CD4-positive, alpha-beta T cell (primary cell): ENCODE measurements at regions of chr14 and their contacts with region 1.

Region 1: DNA sequence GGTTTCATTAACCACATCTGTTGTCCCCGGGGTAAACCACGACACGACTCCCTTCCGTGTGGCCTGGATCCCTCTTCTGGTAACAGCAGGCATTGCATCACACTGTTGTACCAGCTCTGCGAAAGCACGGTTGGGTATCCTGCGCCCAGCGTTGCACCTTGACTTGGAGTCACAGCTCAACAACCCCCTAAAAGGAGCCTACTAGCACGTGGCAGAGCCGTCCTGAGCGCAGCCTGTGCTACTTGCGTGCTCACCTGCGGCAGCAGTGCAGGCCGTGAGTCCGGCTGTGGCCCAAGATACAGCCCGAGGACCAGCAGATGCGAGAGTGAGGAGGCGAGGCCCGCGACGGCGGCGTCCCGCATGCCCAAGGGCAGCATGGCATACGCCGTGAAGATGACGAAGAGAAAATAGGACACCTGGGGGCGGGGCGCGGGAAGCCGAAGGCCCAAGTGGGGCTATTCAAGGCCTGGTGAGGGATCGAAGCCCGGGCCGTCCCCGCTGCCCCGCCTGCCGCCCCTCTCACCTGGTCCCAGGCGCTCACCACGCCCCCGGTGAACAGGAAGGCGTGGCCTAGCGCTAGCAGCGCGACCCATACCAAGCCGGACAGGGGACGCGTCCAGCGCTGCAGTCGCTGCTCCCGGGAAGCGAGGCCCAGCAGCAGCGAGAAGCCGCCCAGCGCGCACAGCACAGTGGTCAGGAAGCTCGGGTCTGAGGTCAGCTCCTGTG is 2.4 kb downstream of the ADCY4 start:
- DNase-seq: peak; percentile 75 to 95 (median 84)
- ATAC-seq: peak; percentile 93
- H3K4me3 ChIP-seq: peak overlapping the region; percentile 48
- H3K4me3 Mint-ChIP-seq: peak overlapping the region; percentile 86
- H3K27ac ChIP-seq: no peak overlapping the region
- H3K27ac Mint-ChIP-seq: peak overlapping the region; percentile 52
- H3K4me1 ChIP-seq: peaks cover 78% of the 10 kb centered on the region
- H3K4me1 Mint-ChIP-seq: peaks cover 59% of the 10 kb centered on the region
- H3K27me3 ChIP-seq: peaks cover 26 to 27% of the 10 kb centered on the region in 2 experiments
- H3K27me3 Mint-ChIP-seq: peaks cover 49% of the 10 kb centered on the region
- CTCF ChIP-seq: peak; percentile 81

Region 2: DNA sequence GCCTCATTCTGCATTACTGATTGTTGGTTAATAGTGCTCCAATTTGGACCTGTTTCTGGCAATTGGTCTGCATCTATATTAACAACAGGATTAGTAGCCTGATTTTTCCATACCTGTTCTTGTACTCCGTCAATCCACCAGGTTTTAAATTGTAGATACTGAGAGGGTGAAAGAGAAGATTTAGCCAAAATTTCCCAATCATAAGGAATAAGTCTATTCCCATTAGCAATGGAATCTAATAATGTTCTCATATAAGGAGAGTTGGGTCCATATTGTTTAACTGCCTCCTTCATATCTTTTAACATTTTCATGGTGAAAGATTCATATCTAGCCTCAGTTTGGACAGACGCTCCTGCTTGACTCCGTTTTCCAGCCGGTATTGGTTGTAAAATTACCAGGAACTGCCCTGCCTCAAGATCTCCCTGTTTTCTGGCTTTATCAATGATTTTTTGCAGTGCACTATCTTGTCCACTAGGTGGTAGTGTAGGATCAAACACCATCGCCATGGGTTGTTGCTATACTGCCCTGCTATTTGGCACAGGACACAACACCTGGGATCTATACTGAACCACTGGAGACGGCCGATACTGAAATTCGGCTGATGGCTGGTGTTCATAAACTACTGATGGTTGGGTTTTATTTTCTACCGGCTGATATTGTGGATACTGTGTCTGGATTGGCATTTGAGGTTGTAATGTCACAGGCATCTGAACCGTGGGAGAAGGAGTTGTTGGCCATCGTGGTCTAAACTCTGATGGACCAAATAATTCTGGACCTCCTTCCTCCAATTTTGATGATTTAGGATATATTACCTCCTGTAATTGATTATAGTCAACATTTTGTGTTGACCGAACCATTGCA is 318.5 kb before region 1 on chr14:
- CTCF ChIA-PET with region 1: no interaction called
- POLR2A ChIA-PET with region 1: no interaction called
- intact Hi-C with region 1: loop called in 1 of 2 experiments (anchors 1 kb)
- DNase-seq: peak in 12 of 14 experiments; percentile 9 to 85 (median 32)
- ATAC-seq: peak; percentile 98
- H3K4me3 ChIP-seq: no peak overlapping the region
- H3K4me3 Mint-ChIP-seq: no peak overlapping the region
- H3K27ac ChIP-seq: no peak overlapping the region
- H3K27ac Mint-ChIP-seq: no peak overlapping the region
- H3K4me1 ChIP-seq: peaks cover 11% of the 10 kb centered on the region
- H3K4me1 Mint-ChIP-seq: peaks cover 25% of the 10 kb centered on the region
- H3K27me3 ChIP-seq: no peaks in the 10 kb centered on the region
- H3K27me3 Mint-ChIP-seq: no peaks in the 10 kb centered on the region
- CTCF ChIP-seq: peak; percentile 92

Region 3: DNA sequence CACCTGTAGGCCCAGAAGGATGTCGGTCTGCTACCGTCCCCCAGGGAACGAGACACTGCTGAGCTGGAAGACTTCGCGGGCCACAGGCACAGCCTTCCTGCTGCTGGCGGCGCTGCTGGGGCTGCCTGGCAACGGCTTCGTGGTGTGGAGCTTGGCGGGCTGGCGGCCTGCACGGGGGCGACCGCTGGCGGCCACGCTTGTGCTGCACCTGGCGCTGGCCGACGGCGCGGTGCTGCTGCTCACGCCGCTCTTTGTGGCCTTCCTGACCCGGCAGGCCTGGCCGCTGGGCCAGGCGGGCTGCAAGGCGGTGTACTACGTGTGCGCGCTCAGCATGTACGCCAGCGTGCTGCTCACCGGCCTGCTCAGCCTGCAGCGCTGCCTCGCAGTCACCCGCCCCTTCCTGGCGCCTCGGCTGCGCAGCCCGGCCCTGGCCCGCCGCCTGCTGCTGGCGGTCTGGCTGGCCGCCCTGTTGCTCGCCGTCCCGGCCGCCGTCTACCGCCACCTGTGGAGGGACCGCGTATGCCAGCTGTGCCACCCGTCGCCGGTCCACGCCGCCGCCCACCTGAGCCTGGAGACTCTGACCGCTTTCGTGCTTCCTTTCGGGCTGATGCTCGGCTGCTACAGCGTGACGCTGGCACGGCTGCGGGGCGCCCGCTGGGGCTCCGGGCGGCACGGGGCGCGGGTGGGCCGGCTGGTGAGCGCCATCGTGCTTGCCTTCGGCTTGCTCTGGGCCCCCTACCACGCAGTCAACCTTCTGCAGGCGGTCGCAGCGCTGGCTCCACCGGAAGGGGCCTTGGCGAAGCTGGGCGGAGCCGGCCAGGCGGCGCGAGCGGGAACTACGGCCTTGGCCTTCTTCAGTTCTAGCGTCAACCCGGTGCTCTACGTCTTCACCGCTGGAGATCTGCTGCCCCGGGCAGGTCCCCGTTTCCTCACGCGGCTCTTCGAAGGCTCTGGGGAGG is 21.5 kb before region 1 on chr14 and contains the start of gene LTB4R:
- CTCF ChIA-PET with region 1: interaction called, 36 read pairs
- POLR2A ChIA-PET with region 1: interaction called, 30 read pairs
- intact Hi-C with region 1: loop called (anchors 2 kb)
- DNase-seq: peak; percentile 47 to 91 (median 61)
- ATAC-seq: peak; percentile 81
- H3K4me3 ChIP-seq: peak within 1 kb of the TSS; percentile 65
- H3K4me3 Mint-ChIP-seq: peak within 1 kb of the TSS; percentile 88
- H3K27ac ChIP-seq: peak within 1 kb of the TSS; percentile 59 to 73
- H3K27ac Mint-ChIP-seq: peak within 1 kb of the TSS; percentile 76
- H3K4me1 ChIP-seq: peaks cover 80% of the 10 kb centered on the region
- H3K4me1 Mint-ChIP-seq: peaks cover 80% of the 10 kb centered on the region
- H3K27me3 ChIP-seq: no peaks in the 10 kb centered on the region
- H3K27me3 Mint-ChIP-seq: no peaks in the 10 kb centered on the region
- CTCF ChIP-seq: peak; percentile 45
- total RNA-seq, gene LTB4R: 15.6 to 18.3 TPM

Region 4: DNA sequence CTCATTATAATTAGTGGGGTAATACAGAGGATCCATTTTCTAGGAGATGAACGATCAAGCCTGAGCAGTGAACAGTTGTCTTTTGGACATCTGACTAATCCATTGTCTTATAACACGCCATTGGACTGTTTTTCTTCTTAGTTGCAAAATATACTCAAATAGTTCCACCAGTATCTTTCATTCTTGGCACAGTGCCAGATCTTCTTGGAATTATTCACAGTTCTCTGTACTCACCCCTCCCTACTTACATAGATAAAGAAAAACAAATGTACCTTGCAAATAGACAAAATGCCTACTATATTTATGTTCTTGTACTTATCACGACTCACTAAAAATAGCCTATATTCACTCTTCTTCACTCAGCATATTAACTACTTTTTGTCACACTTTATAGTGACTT is 93.3 kb after region 1 on chr14:
- CTCF ChIA-PET with region 1: interaction called, 89 read pairs
- POLR2A ChIA-PET with region 1: interaction called, 270 read pairs
- intact Hi-C with region 1: no loop called
- DNase-seq: peak in 2 of 14 experiments; percentile 46 to 53
- ATAC-seq: no peak
- H3K4me3 ChIP-seq: no peak overlapping the region
- H3K4me3 Mint-ChIP-seq: no peak overlapping the region
- H3K27ac ChIP-seq: no peak overlapping the region
- H3K27ac Mint-ChIP-seq: peak overlapping the region; percentile 97
- H3K4me1 ChIP-seq: peaks cover 59% of the 10 kb centered on the region
- H3K4me1 Mint-ChIP-seq: peaks cover 30% of the 10 kb centered on the region
- H3K27me3 ChIP-seq: no peaks in the 10 kb centered on the region
- H3K27me3 Mint-ChIP-seq: no peaks in the 10 kb centered on the region
- CTCF ChIP-seq: no peak

Region 5: DNA sequence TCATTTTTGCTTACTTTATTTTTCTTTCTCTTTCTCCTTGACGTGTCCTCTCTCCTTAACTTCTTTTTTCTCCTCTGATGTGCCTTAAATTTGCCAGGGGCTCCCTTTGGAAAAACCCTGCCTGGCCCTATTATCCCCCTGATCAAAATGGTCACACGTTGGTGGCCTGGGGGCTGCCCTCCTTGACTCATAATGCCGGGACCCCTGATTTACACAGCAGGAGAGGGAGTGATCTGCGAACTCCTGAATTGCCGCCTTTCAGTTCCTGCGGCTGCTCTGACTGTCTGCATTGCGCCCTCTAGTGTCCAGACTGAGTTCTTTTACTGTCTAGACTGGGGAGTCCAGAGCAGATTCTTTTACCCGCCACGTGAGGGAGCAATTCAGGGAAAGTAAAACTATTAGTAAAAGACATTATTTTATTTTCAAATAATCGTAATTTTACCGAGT is 346.4 kb after region 1 on chr14:
- CTCF ChIA-PET with region 1: no interaction called
- POLR2A ChIA-PET with region 1: no interaction called
- intact Hi-C with region 1: loop called in 1 of 2 experiments (anchors 10 kb)
- DNase-seq: peak; percentile 47 to 93 (median 72)
- ATAC-seq: peak; percentile 86
- H3K4me3 ChIP-seq: peak overlapping the region; percentile 25
- H3K4me3 Mint-ChIP-seq: peak overlapping the region; percentile 76
- H3K27ac ChIP-seq: no peak overlapping the region
- H3K27ac Mint-ChIP-seq: peak overlapping the region; percentile 72
- H3K4me1 ChIP-seq: peaks cover 21% of the 10 kb centered on the region
- H3K4me1 Mint-ChIP-seq: peaks cover 47% of the 10 kb centered on the region
- H3K27me3 ChIP-seq: no peaks in the 10 kb centered on the region
- H3K27me3 Mint-ChIP-seq: no peaks in the 10 kb centered on the region
- CTCF ChIP-seq: peak; percentile 100